ENCODE measurements at regions of chr10 and their contacts with region 1.

Region 1: GRCh38 chr10:100743626-100744135 is 1.7 kb upstream of the PAX2 start:
- DNase-seq: no peak
- H3K4me3 ChIP-seq: no peak overlapping the region
- H3K27ac ChIP-seq: no peak overlapping the region
- H3K4me1 ChIP-seq: no peaks in the 10 kb centered on the region
- H3K27me3 ChIP-seq: peaks cover 94% of the 10 kb centered on the region
- CTCF ChIP-seq: peak; percentile 50

Region 2: GRCh38 chr10:100562008-100562711 is 181.5 kb before region 1 on chr10:
- intact Hi-C with region 1: loop called (anchors 5 kb)
- DNase-seq: peak; percentile 67
- H3K4me3 ChIP-seq: no peak overlapping the region
- H3K27ac ChIP-seq: no peak overlapping the region
- H3K4me1 ChIP-seq: peaks cover 9% of the 10 kb centered on the region
- H3K27me3 ChIP-seq: peaks cover 14% of the 10 kb centered on the region
- CTCF ChIP-seq: peak; percentile 95

Region 3: DNA sequence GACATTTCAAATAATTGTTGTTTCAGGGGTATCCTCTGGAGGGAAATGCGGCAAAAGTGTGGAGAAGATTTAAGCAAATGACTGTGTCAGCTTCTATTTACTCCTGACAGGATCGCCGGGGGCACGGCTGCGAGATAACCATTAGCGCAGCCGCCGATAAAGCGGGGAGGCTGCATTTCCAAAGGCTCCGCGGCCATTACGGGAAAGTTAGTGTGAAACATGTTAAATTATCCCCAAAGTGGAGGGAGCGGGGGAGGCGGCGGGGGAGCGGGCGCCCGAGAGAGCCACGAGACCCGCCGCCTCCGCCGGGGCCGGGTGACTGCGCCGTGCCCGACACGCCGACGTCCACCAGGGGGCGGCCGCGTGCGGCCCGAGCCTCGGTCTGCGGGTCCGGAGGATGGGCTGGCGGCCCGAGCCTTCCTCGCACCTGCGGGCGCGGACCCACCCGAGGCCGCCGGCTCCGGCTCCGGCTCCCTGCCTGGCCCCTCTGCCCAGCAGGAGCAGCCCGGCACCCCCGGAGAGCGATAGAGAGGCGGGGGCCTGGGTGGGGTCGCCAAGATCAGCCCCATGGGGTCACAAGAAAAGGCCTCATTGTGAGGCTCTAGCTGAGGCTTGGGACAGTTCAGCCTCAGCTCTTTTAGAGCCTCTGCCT is 72.7 kb before region 1 on chr10:
- intact Hi-C with region 1: loop called (anchors 10 kb)
- DNase-seq: peak; percentile 42
- H3K4me3 ChIP-seq: no peak overlapping the region
- H3K27ac ChIP-seq: no peak overlapping the region
- H3K4me1 ChIP-seq: no peaks in the 10 kb centered on the region
- H3K27me3 ChIP-seq: peaks cover 39% of the 10 kb centered on the region
- CTCF ChIP-seq: peak; percentile 77